Breast epithelium (tissue), 4 donors: ENCODE measurements at regions of chr4 and their contacts with region 1.

Region 1: DNA sequence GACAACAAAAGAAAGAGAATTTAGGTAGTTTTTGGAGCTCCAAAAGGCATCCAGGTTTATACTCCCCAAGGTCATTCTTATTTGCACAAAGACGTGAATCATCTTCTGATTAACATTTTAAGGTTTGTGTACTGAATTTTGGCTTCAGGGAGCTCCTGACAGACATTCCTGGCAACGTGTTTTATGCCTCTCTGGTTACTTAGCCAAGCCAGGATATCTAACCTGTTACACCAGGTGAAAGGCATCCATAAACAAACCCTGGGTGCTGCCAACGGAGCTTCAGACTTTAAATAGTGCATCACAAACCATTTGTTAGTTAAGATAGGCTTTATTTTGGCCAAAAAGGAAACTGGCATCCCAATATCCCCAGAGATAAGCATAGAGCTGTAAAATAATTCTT is 997.3 kb downstream of the ARAP2 start:
- DNase-seq: no peak
- H3K4me3 ChIP-seq: no peak overlapping the region
- H3K27ac ChIP-seq: no peak overlapping the region
- H3K4me1 ChIP-seq: no peaks in the 10 kb centered on the region
- H3K27me3 ChIP-seq: no peaks in the 10 kb centered on the region
- CTCF ChIP-seq: no peak
- POLR2A ChIP-seq: no peak

Region 2: GRCh38 chr4:35884714-35885480 is 637.9 kb after region 1 on chr4:
- intact Hi-C with region 1: loop called (anchors 5 kb)
- DNase-seq: no peak
- H3K4me3 ChIP-seq: no peak overlapping the region
- H3K27ac ChIP-seq: no peak overlapping the region
- H3K4me1 ChIP-seq: no peaks in the 10 kb centered on the region
- H3K27me3 ChIP-seq: no peaks in the 10 kb centered on the region
- CTCF ChIP-seq: no peak
- POLR2A ChIP-seq: no peak